ENCODE measurements at regions of chr11 and their contacts with region 1.

Region 1: GRCh38 chr11:45354976-45355705 is 69.0 kb upstream of the SYT13 start:
- DNase-seq: peak; percentile 88
- H3K4me3 ChIP-seq: peak overlapping the region; percentile 66 to 67
- H3K27ac ChIP-seq: peak overlapping the region in 1 of 2 experiments; percentile 64; a peak in 1 of 4 replicates
- H3K4me1 ChIP-seq: peaks cover 0 to 4% of the 10 kb centered on the region in 2 experiments; a peak in 2 of 4 replicates
- H3K27me3 ChIP-seq: no peaks in the 10 kb centered on the region
- CTCF ChIP-seq: no peak
- EP300 ChIP-seq: no peak
- RAD21 ChIP-seq: no peak

Region 2: DNA sequence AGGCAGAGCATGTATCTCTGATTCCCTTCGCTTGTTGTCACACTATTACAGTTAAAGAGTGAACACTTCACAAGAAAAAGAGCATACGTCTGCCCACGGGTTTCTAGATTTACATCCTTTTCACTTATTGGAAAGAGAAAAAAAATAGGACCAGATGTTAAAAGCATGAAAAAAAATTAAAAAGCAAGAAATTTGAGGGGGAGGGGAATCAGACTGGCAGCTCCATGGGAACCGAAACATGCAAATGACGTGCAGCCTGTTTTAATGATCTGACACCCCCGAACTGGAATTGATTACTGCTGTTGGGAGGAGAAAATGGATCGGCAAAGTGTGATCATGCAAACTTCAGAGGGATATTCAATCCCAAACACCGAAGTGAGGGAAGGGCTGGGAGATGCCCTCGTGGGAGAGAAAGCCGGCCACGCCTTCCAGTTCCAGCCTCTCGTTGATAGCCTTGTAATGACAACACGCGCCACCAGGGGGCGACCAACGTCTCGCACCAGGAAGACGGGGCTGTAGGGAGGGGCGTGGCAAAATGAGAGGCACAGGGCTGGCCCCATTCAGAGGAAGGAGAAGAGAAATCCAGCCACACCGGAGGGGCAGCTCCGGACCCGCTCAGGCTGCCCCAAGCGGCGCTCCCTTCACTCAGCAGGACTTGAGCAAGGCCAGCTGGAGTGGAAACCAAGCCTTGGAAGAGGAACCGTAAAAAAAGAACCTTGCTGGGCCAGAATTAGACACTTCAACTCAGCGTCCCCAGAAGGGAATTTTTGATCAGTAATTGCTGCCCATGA is 15.2 kb before region 1 on chr11:
- CTCF ChIA-PET with region 1: interaction called, 25 read pairs
- POLR2A ChIA-PET with region 1: no interaction called
- DNase-seq: peak; percentile 90
- H3K4me3 ChIP-seq: peak overlapping the region in 1 of 2 experiments; percentile 22; a peak in 2 of 4 replicates
- H3K27ac ChIP-seq: no peak overlapping the region
- H3K4me1 ChIP-seq: peaks cover 0 to 8% of the 10 kb centered on the region in 2 experiments; a peak in 2 of 4 replicates
- H3K27me3 ChIP-seq: peaks cover 37% of the 10 kb centered on the region; the same call in 1 of the 2 replicates
- CTCF ChIP-seq: peak; percentile 83
- EP300 ChIP-seq: no peak
- RAD21 ChIP-seq: peak; percentile 67

Measured in SK-N-SH (cell line).